Panc1 (cell line): ENCODE measurements at regions of chr2 and their contacts with region 1.

Region 1: DNA sequence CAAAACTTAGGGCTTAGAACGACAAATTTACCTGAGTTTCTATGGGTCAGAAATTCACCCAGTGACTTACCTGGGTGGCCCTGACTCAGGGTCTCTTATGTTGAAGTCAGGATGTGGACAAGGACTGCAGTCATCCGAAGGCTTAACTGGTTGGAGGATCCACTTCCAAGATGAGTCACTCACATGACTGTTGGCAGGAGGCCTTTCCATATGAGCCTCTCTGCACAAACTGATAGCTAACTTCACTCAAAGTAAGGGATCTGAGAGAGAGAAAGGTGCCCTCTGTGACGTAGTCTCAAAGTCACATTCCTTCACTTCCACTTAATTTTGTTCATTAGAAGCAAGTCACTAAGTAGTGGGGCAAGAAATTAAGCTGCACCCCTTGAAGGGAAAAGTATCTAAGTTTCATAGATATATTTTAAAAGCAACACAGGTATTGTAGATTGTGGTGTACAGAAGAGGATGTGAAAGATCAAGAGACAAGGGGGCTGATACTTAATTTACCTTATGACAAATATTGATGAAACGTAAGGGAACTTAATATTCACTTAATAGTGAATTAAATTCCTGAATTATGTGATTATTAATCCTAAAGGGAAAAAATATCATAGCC is 48.4 kb downstream of the TANK start:
- DNase-seq: no peak
- ATAC-seq: no peak
- H3K4me3 ChIP-seq: no peak overlapping the region
- H3K27ac ChIP-seq: no peak overlapping the region
- H3K4me1 ChIP-seq: no peaks in the 10 kb centered on the region
- H3K27me3 ChIP-seq: no peaks in the 10 kb centered on the region
- CTCF ChIP-seq: no peak

Region 2: GRCh38 chr2:161312996-161313395 is 104.4 kb after region 1 on chr2:
- CTCF ChIA-PET with region 1: no interaction called
- POLR2A ChIA-PET with region 1: interaction called, 10 read pairs
- in situ Hi-C with region 1: no loop called
- intact Hi-C with region 1: no loop called
- DNase-seq: no peak
- ATAC-seq: no peak
- H3K4me3 ChIP-seq: no peak overlapping the region
- H3K27ac ChIP-seq: no peak overlapping the region
- H3K4me1 ChIP-seq: 0 out of 2 replicates have a peak, but pooled peaks cover 3% of the 10 kb centered on the region
- H3K27me3 ChIP-seq: no peaks in the 10 kb centered on the region
- CTCF ChIP-seq: no peak

Region 3: DNA sequence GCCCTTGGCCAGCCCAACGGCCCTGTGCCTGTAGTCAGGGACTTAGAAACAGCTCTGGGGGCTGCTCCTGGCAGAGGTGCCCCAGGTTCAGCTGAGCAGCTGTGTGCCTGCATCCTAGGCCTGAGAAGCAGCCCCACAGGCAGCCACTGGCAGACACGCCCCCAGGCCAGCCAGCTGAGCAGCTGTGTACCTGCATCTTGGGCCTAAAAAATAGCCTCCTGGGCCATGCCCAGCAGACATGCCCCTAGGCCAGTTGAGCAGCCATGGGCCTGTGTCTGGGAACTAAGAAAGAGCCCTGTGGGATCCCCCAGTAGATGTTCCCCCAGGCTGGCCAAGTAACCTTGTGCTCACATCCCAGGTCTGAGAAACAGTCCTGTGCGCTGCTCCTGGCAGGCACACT is 271.5 kb after region 1 on chr2:
- CTCF ChIA-PET with region 1: no interaction called
- POLR2A ChIA-PET with region 1: no interaction called
- in situ Hi-C with region 1: no loop called
- intact Hi-C with region 1: no loop called
- DNase-seq: no peak
- ATAC-seq: no peak
- H3K4me3 ChIP-seq: no peak overlapping the region
- H3K27ac ChIP-seq: no peak overlapping the region
- H3K4me1 ChIP-seq: no peaks in the 10 kb centered on the region
- H3K27me3 ChIP-seq: no peaks in the 10 kb centered on the region
- CTCF ChIP-seq: no peak